K562 (cell line): ENCODE measurements at regions of chr2 and their contacts with region 1.

Region 1: GRCh38 chr2:187581125-187581896 is 27.1 kb upstream of the TFPI start:
- DNase-seq: peak; percentile 31 to 76 (median 47)
- ATAC-seq: peak; percentile 79
- H3K4me3 ChIP-seq: no peak overlapping the region
- H3K27ac ChIP-seq: peak overlapping the region; percentile 47; the same call in 2 of the 3 replicates
- H3K4me1 ChIP-seq: no peaks in the 10 kb centered on the region; a peak in 1 of 5 replicates
- H3K27me3 ChIP-seq: no peaks in the 10 kb centered on the region
- CTCF ChIP-seq: peak; percentile 64 to 75 (median 74); a peak in 5 of 6 replicates
- EP300 ChIP-seq: no peak
- POLR2A ChIP-seq: no peak
- RAD21 ChIP-seq: peak; percentile 67 to 74

Region 2: GRCh38 chr2:187499941-187500532 is 81.3 kb before region 1 on chr2:
- CTCF ChIA-PET with region 1: interaction called, 320 read pairs
- POLR2A ChIA-PET with region 1: no interaction called
- in situ Hi-C with region 1: loop called (anchors 5 kb)
- intact Hi-C with region 1: loop called (anchors 1 kb)
- DNase-seq: peak; percentile 45 to 77 (median 56)
- ATAC-seq: peak; percentile 87
- H3K4me3 ChIP-seq: no peak overlapping the region
- H3K27ac ChIP-seq: no peak overlapping the region
- H3K4me1 ChIP-seq: peaks cover 0 to 12% of the 10 kb centered on the region in 2 experiments; a peak in 3 of 5 replicates
- H3K27me3 ChIP-seq: no peaks in the 10 kb centered on the region
- CTCF ChIP-seq: peak; percentile 71 to 97 (median 84)
- EP300 ChIP-seq: no peak
- POLR2A ChIP-seq: no peak
- RAD21 ChIP-seq: peak; percentile 99 to 100

Region 3: DNA sequence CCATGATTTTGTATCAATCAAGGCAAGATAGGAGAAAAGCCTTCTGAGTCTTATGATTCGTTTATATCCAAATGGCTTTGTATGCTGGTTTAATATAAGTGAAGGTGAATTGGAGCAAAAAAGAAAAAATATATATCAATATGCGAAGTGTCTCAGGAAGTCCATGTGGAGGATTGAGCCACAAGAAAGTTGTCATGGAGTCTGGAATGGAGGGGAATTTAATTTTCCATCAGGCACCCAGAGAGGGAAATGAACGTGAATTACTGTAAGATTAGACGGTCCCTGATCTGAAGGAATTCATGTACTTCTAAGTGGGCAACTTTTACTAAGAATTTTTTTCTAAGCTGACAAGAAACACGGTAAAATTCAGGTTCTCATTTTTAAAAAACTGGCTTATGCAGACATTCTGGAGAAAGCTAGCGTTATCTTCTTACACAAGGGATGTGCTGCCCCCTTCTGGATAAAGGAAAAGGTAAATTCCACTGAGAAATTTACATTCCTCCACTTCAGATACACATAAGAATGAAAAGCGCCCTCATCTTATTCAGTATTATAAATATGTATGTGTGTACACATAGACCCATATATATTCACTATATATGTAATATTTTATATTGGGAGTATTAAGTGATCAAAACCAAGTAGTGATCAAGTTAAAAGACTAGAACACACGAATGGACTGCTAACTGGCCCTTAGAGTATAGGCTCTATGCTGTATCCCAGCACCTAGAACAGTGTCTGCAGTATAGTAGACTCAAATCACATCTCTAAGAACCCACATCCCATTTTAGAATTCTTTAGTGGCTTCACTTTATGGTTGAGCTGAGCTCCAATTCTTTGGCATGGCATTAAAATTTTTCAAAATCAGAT is 261.9 kb after region 1 on chr2:
- CTCF ChIA-PET with region 1: interaction called, 19 read pairs
- POLR2A ChIA-PET with region 1: no interaction called
- in situ Hi-C with region 1: no loop called
- intact Hi-C with region 1: loop called (anchors 1 kb)
- DNase-seq: peak; percentile 9 to 57 (median 19)
- ATAC-seq: peak; percentile 75
- H3K4me3 ChIP-seq: no peak overlapping the region
- H3K27ac ChIP-seq: no peak overlapping the region
- H3K4me1 ChIP-seq: no peaks in the 10 kb centered on the region
- H3K27me3 ChIP-seq: no peaks in the 10 kb centered on the region
- CTCF ChIP-seq: peak; percentile 34 to 61 (median 46); a peak in 5 of 6 replicates
- EP300 ChIP-seq: no peak
- POLR2A ChIP-seq: no peak
- RAD21 ChIP-seq: peak; percentile 46 to 71

Region 4: GRCh38 chr2:188524519-188525113 is 943.3 kb after region 1 on chr2:
- CTCF ChIA-PET with region 1: no interaction called
- POLR2A ChIA-PET with region 1: no interaction called
- in situ Hi-C with region 1: loop called (anchors 25 kb)
- intact Hi-C with region 1: loop called (anchors 10 kb)
- DNase-seq: peak; percentile 13 to 46 (median 16)
- ATAC-seq: peak; percentile 63; the same call in 1 of the 3 replicates
- H3K4me3 ChIP-seq: no peak overlapping the region
- H3K27ac ChIP-seq: no peak overlapping the region
- H3K4me1 ChIP-seq: no peaks in the 10 kb centered on the region
- H3K27me3 ChIP-seq: no peaks in the 10 kb centered on the region
- CTCF ChIP-seq: peak; percentile 33 to 66 (median 34); a peak in 5 of 6 replicates
- EP300 ChIP-seq: no peak
- POLR2A ChIP-seq: no peak
- RAD21 ChIP-seq: peak; percentile 28 to 55; a peak in 2 of 4 replicates